ENCODE measurements at regions of chr17 and their contacts with region 1.

Region 1: DNA sequence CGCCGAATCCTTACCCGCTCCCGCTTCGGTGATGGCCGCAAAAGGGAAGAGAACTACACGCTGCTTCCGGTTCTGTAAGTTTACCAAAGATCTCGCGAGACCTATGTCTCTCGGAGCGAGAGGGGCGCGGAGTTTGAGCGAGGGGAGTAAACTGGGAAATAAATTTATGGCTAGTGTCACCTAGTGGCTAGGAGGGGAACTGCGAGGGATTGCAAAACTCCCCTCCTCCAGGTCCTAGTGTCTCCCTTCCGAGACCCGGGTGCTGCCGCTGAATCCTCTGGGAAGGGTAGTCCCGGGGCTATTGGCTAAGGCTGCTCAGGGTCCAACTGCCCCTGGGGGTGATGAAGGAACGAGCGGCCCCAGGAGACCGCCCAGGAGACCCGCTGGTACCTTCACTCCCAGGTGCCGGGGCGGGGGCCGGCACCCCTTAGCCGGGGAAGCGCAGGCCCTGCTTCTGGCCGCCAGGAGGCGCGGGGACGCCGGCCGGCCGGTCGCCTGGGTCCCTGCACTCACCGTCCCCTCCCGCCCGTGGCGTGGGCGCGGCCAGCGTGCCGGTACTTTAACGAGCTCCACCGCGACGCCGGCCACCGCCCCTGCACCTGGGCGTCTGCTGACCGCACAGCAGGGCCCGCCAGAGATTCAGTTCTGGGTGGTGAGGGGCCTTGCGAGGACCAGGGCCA is at the start of gene RPL26:
- DNase-seq: peak; percentile 89 to 97
- H3K4me3 ChIP-seq: peak within 1 kb of the TSS; percentile 92
- H3K27ac ChIP-seq: peak within 1 kb of the TSS; percentile 94
- H3K4me1 ChIP-seq: peaks cover 33% of the 10 kb centered on the region
- H3K27me3 ChIP-seq: no peaks in the 10 kb centered on the region
- CTCF ChIP-seq: peak; percentile 92
- total RNA-seq, gene RPL26: 2,320 and 2,519 TPM in 2 replicates

Region 2: DNA sequence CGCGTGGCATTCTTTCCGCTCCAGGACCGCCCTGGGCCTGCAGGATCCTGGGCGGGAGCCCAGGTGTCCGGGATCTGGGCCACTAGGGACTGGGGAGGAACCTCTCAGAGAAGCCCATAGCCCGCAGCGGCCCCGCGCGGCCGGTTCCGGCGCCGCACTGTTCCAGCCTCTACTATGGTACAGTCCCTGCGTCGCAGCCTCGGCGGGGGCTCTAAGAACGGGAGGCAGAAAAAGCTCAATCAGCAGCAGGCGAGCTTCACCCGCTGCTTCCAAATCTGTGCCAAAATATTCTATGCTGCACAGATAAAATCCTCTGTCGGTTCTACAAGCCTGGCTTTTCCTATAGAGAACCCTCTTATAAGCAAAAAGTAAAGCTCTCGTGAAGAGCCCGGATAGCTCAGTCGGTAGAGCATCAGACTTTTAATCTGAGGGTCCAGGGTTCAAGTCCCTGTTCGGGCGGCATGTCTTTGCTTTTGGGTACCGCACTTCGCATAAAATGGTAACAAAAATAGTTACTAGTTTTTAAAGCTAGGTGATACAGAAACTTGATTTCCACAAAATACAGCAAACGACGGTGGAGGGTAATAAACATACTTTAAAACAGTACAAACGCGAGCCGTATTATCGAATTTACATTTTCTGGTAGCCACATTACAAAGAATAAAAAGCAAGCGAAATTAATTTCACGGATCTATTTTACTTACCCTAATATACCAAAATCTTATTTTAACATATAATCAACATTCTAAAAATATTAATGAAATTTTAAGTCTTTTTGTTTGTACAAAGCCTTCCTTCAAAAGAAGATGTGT is 264.3 kb before region 1 on chr17:
- CTCF ChIA-PET with region 1: no interaction called
- POLR2A ChIA-PET with region 1: no interaction called
- intact Hi-C with region 1: loop called (anchors 2 kb)
- DNase-seq: peak; percentile 67 to 87
- H3K4me3 ChIP-seq: peak overlapping the region; percentile 87
- H3K27ac ChIP-seq: peak overlapping the region; percentile 87
- H3K4me1 ChIP-seq: peaks cover 11% of the 10 kb centered on the region
- H3K27me3 ChIP-seq: no peaks in the 10 kb centered on the region
- CTCF ChIP-seq: peak; percentile 74

Region 3: DNA sequence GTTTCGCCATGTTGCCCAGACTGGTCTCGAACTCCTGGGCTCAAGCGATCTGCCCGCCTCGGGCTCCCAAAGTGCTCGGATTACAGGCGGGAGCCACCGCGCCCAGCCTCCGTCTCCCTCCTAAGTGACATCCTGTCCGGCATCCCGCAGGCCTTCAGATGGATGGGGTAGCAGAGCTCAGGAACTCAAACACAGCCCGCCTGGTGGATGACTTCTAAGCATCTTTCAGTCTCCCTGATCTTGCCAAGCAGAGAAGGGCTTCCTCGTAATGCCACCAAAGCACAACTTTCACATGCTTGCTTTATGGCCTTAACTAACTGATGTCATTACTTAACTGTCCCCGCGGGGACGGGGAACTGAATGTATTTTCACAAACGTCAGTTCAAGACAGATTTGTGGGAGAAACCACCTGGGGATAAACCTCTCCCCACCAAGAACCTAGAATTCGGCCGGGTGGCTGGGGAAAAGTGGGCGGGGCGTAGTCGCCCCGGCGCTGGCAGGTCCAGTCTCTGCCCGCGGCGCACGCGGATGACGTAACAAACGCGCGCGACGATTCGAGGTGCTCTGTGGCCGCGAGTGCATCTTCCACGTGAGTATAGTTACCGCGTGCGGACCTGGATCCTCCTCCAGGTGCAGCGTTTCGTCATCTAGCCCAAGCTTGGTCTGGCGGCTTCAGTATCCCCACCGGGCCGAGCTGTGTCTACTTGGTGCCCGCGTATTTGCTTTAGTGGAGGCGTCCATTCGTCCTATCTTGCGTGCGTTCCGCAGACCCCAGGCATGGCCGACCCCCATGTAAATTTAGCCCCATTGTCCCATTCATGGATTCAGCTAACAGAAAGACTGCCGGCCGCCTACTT is 134.3 kb before region 1 on chr17 and contains the start of gene PFAS:
- CTCF ChIA-PET with region 1: interaction called, 6 read pairs
- POLR2A ChIA-PET with region 1: interaction called, 8 read pairs
- intact Hi-C with region 1: loop called (anchors 2 kb)
- DNase-seq: peak; percentile 83 to 96
- H3K4me3 ChIP-seq: peak within 1 kb of the TSS; percentile 99
- H3K27ac ChIP-seq: peak within 1 kb of the TSS; percentile 93
- H3K4me1 ChIP-seq: peaks cover 8% of the 10 kb centered on the region; the same call in 1 of the 2 replicates
- H3K27me3 ChIP-seq: no peaks in the 10 kb centered on the region
- CTCF ChIP-seq: no peak
- total RNA-seq, gene PFAS: 54.5 and 68.2 TPM in 2 replicates

Region 4: DNA sequence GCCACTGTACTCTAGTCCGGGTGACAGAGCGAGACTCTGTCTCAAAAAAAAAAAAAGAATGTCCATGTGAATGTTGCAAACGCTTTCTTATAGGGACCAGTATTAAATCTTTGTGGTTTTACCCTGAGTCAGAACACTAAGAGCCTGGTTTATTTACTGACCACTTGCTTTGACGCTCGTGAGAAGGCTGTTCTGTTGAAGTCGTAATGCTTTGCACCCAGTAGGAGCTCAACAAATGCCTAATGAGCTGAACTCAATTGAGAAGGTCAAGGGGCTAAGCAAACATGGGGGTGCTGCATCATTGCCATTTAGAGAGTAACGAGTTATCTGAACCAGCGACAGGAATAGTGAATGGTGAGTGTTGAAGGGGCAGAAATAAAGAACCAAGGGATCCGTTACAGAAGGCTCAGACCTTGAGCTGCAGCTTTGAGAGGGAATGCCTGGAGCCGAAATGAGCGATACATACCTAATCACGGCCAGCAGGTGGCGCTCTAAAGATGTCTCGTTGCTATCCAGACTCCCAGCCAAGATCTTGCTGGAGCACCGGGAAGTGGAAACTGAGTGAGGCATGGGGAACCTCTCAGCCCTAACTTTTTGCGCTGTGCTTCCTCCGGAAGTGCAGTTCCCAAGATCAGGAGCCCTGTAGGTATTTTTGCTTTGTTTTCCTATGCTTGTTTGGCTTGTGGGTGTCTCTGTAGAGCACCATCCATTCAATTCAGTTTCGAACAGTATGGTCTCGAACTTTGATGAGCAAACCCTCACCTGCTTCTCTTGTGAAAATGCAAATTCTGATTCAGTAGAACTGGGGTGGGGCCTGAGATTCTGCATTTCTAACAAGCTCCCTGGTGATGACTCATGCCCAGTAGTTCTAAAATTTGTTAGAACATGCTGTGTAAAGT is 26.9 kb after region 1 on chr17:
- CTCF ChIA-PET with region 1: interaction called, 23 read pairs
- POLR2A ChIA-PET with region 1: interaction called, 3 read pairs
- intact Hi-C with region 1: loop called (anchors 1 kb)
- DNase-seq: peak; percentile 49 to 81
- H3K4me3 ChIP-seq: no peak overlapping the region
- H3K27ac ChIP-seq: no peak overlapping the region
- H3K4me1 ChIP-seq: no peaks in the 10 kb centered on the region; the same call in 1 of the 2 replicates
- H3K27me3 ChIP-seq: no peaks in the 10 kb centered on the region
- CTCF ChIP-seq: peak; percentile 80

Region 5: DNA sequence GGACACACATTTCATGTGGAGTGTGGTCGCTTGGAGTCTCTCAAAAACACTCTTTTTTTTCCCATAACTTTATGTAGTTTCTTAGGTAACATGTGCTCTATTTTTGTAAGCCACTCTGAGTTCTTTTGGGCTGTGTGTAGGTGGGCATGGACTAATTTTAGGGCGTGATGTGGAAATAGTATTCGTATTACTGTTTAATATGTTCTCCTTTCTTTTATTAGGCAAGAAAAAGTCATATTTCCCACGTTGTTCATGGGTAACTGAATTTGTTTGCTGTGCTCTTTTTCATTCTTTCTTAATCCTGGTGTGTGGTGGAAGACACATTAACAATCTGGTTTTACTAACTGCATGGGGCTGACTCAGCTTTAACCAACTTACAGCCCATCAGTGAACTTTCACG is 79.8 kb after region 1 on chr17:
- CTCF ChIA-PET with region 1: no interaction called
- POLR2A ChIA-PET with region 1: no interaction called
- intact Hi-C with region 1: no loop called
- DNase-seq: no peak
- H3K4me3 ChIP-seq: no peak overlapping the region
- H3K27ac ChIP-seq: no peak overlapping the region
- H3K4me1 ChIP-seq: no peaks in the 10 kb centered on the region
- H3K27me3 ChIP-seq: no peaks in the 10 kb centered on the region
- CTCF ChIP-seq: no peak

Region 6: GRCh38 chr17:8745586-8746500 is 362.6 kb after region 1 on chr17:
- CTCF ChIA-PET with region 1: interaction called, 18 read pairs
- POLR2A ChIA-PET with region 1: interaction called, 5 read pairs
- intact Hi-C with region 1: loop called (anchors 1 kb)
- DNase-seq: peak in 1 of 2 experiments; percentile 59
- H3K4me3 ChIP-seq: peak overlapping the region; percentile 31; the same call in 1 of the 2 replicates
- H3K27ac ChIP-seq: no peak overlapping the region
- H3K4me1 ChIP-seq: no peaks in the 10 kb centered on the region
- H3K27me3 ChIP-seq: peaks cover 18% of the 10 kb centered on the region
- CTCF ChIP-seq: peak; percentile 76

Region 7: DNA sequence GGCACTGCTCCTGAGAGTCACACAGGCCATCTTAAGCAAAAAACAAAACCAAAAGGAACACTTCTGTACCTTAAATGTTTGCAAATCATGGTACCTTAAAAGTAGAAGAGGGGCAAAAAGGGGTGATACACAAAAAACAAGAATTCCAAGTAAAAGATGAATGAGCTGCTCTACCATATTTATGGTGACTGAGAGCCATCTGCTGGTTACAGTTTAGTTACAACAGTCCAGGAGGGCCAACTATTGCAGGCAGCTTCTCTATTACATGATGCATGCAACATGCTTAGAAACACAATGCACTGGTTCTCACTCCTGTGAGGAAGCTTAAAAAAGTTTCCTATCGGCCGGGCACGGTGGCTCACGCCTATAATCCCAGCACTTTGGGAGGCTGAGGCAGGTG is 1138.8 kb after region 1 on chr17:
- CTCF ChIA-PET with region 1: no interaction called
- POLR2A ChIA-PET with region 1: no interaction called
- intact Hi-C with region 1: loop called (anchors 10 kb)
- DNase-seq: peak in 1 of 2 experiments; percentile 17
- H3K4me3 ChIP-seq: no peak overlapping the region
- H3K27ac ChIP-seq: no peak overlapping the region
- H3K4me1 ChIP-seq: no peaks in the 10 kb centered on the region
- H3K27me3 ChIP-seq: no peaks in the 10 kb centered on the region
- CTCF ChIP-seq: peak; percentile 58